Activated B cell treated with CpG ODN at 0.5 μM for 24 hours (primary cell): ENCODE measurements at regions of chr9 and their contacts with region 1.

Region 1: GRCh38 chr9:92706216-92706940 is 36.4 kb upstream of the IPPK start:
- DNase-seq: no peak
- ATAC-seq: peak; percentile 58
- H3K4me3 Mint-ChIP-seq: no peak overlapping the region
- H3K27ac Mint-ChIP-seq: no peak overlapping the region
- H3K4me1 Mint-ChIP-seq: peaks cover 7% of the 10 kb centered on the region
- H3K27me3 Mint-ChIP-seq: no peaks in the 10 kb centered on the region
- CTCF ChIP-seq: no peak

Region 2: GRCh38 chr9:92315456-92315855 is 390.9 kb before region 1 on chr9:
- CTCF ChIA-PET with region 1: no interaction called
- POLR2A ChIA-PET with region 1: interaction called, 15 read pairs
- intact Hi-C with region 1: no loop called
- DNase-seq: no peak
- ATAC-seq: no peak
- H3K4me3 Mint-ChIP-seq: no peak overlapping the region
- H3K27ac Mint-ChIP-seq: no peak overlapping the region
- H3K4me1 Mint-ChIP-seq: peaks cover 13% of the 10 kb centered on the region
- H3K27me3 Mint-ChIP-seq: no peaks in the 10 kb centered on the region
- CTCF ChIP-seq: no peak

Region 3: GRCh38 chr9:92738661-92739081 is 32.3 kb after region 1 on chr9:
- CTCF ChIA-PET with region 1: no interaction called
- POLR2A ChIA-PET with region 1: no interaction called
- intact Hi-C with region 1: no loop called
- DNase-seq: no peak
- ATAC-seq: no peak
- H3K4me3 Mint-ChIP-seq: no peak overlapping the region
- H3K27ac Mint-ChIP-seq: no peak overlapping the region
- H3K4me1 Mint-ChIP-seq: peaks cover 90% of the 10 kb centered on the region
- H3K27me3 Mint-ChIP-seq: no peaks in the 10 kb centered on the region
- CTCF ChIP-seq: no peak